HepG2 (cell line): ENCODE measurements at regions of chr6 and their contacts with region 1.

Region 1: GRCh38 chr6:152267967-152268845 is 369.0 kb downstream of the SYNE1 start:
- DNase-seq: peak; percentile 45
- ATAC-seq: no peak
- H3K4me3 ChIP-seq: no peak overlapping the region
- H3K27ac ChIP-seq: no peak overlapping the region
- H3K4me1 ChIP-seq: no peaks in the 10 kb centered on the region
- H3K27me3 ChIP-seq: no peaks in the 10 kb centered on the region
- CTCF ChIP-seq: peak; percentile 68
- EP300 ChIP-seq: no peak
- POLR2A ChIP-seq: no peak
- RAD21 ChIP-seq: peak; percentile 54; the same call in 1 of the 2 replicates

Region 2: DNA sequence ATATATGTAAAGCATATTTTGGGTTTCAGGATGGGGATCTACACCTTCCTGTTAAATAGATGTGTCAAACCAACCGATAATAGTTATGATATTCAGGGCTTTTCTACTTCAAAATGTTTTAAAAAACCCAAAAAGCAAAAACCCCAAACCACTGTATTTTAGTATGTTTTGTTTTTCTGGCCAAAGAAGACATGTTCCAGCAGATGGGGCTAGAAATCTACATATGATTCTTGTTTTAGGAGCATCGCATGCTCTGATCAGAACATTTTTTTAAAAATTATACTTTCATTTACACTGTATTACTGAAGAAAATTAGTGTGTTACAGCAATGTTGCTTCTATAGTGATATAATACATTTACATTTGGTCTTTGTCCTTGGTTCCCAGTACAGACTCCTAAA is 827.3 kb before region 1 on chr6:
- CTCF ChIA-PET with region 1: no interaction called
- POLR2A ChIA-PET with region 1: no interaction called
- in situ Hi-C with region 1: no loop called
- intact Hi-C with region 1: loop called (anchors 10 kb)
- DNase-seq: no peak
- ATAC-seq: peak; percentile 3; the same call in 1 of the 3 replicates
- H3K4me3 ChIP-seq: peak overlapping the region in 2 of 3 experiments; percentile 0; a peak in 1 of 6 replicates
- H3K27ac ChIP-seq: peak overlapping the region; percentile 49
- H3K4me1 ChIP-seq: peaks cover 96% of the 10 kb centered on the region
- H3K27me3 ChIP-seq: no peaks in the 10 kb centered on the region
- CTCF ChIP-seq: peak; percentile 52
- EP300 ChIP-seq: no peak
- POLR2A ChIP-seq: no peak
- RAD21 ChIP-seq: 0 out of 2 replicates have a peak, but pooled peaks have one; percentile 33

Region 3: GRCh38 chr6:151661928-151662327 is 606.3 kb before region 1 on chr6:
- CTCF ChIA-PET with region 1: no interaction called
- POLR2A ChIA-PET with region 1: no interaction called
- in situ Hi-C with region 1: loop called (anchors 10 kb)
- intact Hi-C with region 1: no loop called
- DNase-seq: no peak
- ATAC-seq: no peak
- H3K4me3 ChIP-seq: no peak overlapping the region
- H3K27ac ChIP-seq: no peak overlapping the region
- H3K4me1 ChIP-seq: peaks cover 33% of the 10 kb centered on the region
- H3K27me3 ChIP-seq: no peaks in the 10 kb centered on the region
- CTCF ChIP-seq: no peak
- EP300 ChIP-seq: no peak
- POLR2A ChIP-seq: no peak
- RAD21 ChIP-seq: no peak

Region 4: DNA sequence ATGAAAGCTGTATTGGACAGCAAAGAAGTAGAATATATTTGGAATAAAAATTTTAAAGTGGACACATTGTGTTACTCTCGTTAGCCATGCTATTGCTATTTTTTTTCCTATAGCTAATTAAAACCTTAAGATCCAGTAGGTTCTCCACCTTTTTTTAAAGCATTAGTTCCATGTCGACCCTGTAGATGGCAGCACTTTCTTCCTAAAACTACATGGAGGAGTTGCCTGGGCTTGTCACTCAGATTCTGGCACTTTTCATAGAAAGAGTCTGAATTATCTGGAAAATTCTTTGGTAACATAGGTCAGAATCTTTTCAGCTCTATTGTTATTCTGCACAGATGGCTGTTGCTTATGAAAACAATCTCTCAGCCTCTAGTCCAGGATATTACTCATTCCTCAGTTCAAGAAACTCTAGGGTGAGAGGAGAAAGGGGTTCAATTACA is 502.7 kb before region 1 on chr6:
- CTCF ChIA-PET with region 1: interaction called, 28 read pairs
- POLR2A ChIA-PET with region 1: no interaction called
- in situ Hi-C with region 1: loop called (anchors 5 kb)
- intact Hi-C with region 1: loop called (anchors 1 kb)
- DNase-seq: peak; percentile 79
- ATAC-seq: peak; percentile 58
- H3K4me3 ChIP-seq: no peak overlapping the region
- H3K27ac ChIP-seq: no peak overlapping the region
- H3K4me1 ChIP-seq: no peaks in the 10 kb centered on the region
- H3K27me3 ChIP-seq: no peaks in the 10 kb centered on the region; a peak in 1 of 5 replicates
- CTCF ChIP-seq: peak; percentile 75
- EP300 ChIP-seq: no peak
- POLR2A ChIP-seq: no peak
- RAD21 ChIP-seq: 0 out of 2 replicates have a peak, but pooled peaks have one; percentile 23

Region 5: DNA sequence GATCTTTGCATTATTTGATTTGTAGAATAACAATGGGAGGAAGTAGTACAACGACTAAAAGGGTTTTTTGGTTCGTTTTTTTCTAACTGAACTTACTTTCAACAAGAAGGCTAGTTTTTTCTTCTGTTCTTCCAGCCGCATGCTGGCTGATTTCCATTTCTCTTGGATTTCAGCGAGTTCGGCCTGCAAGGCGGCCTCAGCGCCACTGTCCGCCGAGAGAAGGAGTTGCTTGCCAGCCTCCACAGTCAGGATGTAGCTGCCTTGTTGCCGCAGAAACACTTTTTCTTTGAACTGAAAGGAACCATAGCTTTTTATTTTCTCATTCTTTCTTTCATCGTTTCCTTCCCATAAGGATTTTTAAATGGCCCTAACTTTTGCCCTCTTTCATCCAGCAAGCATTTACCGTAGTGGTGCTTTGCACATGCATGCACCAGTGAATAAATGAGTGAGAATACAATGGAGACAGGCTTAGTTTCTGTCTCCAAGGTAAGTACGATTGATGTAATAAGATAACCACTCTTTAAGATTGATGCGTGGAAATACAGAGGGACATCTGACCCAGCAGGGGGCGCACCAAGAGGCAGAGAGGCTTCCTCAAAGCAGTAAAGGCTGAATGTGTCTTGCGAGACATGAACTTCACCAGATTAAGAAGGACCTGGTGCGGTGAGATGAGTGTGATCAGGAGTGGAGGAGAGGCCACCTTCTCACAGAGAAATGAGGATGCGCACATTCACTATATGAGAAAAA is 62.0 kb before region 1 on chr6:
- CTCF ChIA-PET with region 1: interaction called, 19 read pairs
- POLR2A ChIA-PET with region 1: interaction called, 3 read pairs
- in situ Hi-C with region 1: no loop called
- intact Hi-C with region 1: loop called (anchors 1 kb)
- DNase-seq: peak; percentile 17
- ATAC-seq: peak; percentile 60
- H3K4me3 ChIP-seq: no peak overlapping the region
- H3K27ac ChIP-seq: no peak overlapping the region
- H3K4me1 ChIP-seq: peaks cover 9% of the 10 kb centered on the region; the same call in 1 of the 2 replicates
- H3K27me3 ChIP-seq: no peaks in the 10 kb centered on the region
- CTCF ChIP-seq: peak; percentile 59
- EP300 ChIP-seq: no peak
- POLR2A ChIP-seq: no peak
- RAD21 ChIP-seq: no peak

Region 6: DNA sequence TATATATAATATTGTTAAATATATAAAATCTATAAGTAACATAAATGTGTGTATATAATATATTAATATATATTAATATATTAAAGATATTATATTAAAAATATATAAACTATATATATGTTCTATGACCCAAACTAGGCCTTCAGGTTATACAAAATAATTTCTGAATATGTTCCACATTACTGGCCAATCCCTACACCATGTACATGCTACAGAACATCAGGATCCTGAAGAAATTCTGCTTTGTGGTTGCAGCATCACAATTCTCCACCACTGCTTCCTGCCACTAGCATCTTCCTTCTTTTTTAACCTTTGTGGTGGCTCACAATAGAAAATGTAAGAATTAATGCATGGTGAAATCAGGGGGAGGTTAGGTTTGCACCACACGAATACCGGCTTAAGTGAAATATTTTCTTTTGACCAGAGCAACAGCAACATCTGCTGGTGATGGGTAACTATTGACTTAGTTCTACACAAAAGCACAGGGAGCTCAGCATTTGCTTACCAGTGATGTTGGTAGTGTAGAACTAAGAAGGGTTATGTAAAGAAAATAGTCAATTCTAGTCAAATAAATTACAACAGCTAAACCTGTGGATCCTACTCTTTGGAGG is 88.3 kb after region 1 on chr6:
- CTCF ChIA-PET with region 1: no interaction called
- POLR2A ChIA-PET with region 1: no interaction called
- in situ Hi-C with region 1: no loop called
- intact Hi-C with region 1: no loop called
- DNase-seq: peak; percentile 63
- ATAC-seq: peak; percentile 96
- H3K4me3 ChIP-seq: no peak overlapping the region
- H3K27ac ChIP-seq: no peak overlapping the region
- H3K4me1 ChIP-seq: no peaks in the 10 kb centered on the region
- H3K27me3 ChIP-seq: no peaks in the 10 kb centered on the region
- CTCF ChIP-seq: peak; percentile 82
- EP300 ChIP-seq: no peak
- POLR2A ChIP-seq: no peak
- RAD21 ChIP-seq: peak; percentile 76; the same call in 1 of the 2 replicates